Left cardiac atrium (tissue), 4 donors: ENCODE measurements at regions of chr15 and their contacts with region 1.

Region 1: DNA sequence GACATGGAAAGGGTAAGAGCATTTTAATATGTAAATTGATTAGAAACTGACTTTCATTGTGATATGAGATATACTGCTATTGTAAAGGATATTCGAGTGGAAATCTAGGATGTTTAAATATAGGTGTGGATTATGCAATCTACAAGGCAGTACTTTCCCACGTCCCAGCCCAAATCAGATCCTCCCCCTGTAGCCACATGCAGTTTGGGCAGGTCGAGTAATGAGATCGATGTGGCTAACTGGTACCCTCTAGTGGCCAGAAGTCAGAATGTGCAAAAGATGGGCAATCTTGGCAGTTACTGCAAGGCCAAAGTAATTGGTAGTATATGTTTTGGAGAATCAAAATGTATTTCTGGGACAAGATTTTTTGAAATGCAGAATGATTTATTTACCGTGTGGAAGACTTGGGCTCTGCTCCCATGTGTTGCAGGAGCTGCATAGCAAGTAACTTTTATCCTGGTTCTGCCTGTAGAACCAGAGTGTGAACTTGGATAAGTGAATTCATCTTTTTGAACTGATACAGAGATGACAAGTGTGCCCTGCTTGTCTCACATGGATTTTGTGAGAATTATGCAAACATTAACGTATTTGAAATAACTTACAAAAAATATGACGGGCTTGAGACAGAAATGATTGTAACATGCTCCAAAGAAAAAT is 94.5 kb upstream of the ADAMTSL3 start:
- DNase-seq: peak; percentile 48
- ATAC-seq: peak; percentile 38 to 81

Region 2: DNA sequence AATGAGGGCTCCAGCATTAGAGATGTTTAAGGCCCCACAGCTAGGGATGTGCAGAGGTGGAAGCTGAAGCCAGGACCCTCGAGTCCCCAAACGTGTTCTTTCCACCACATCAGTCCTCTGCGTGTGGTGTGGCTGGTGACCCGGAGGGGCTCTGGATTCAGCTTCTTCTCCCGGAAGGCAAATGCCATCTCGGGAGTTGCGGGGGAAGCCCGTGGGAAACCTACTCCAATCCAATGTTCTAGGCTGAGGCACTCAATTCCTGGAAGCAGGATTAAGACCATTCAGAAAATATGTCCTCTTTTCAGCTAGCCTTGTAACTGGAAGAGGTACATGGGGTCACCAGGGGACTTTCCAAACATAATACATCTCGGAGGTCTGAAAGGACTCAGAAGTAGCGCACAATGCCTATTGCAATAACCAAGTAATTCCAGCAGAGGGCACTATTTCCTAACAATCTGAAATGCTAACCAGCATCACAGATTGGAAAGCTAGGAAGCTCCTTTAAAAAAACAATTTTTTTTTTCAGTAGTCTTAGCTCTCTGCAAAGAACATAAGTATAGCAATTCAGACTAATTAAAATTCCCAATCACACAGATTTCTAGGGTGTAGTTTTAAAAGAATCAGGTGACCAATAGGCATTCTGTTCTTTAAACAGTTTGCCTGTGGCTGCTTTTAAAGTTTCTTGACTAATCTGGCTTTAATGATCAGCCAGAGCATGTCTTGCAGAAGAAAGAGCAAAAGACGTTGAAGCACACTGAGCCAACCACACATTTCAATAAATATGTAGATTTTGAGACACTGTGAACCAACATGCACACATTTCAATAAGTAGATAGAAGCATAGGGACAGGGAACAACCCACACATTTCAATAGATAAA is 311.0 kb before region 1 on chr15:
- intact Hi-C with region 1: loop called in 1 of 2 experiments (anchors 5 kb)
- DNase-seq: no peak
- ATAC-seq: peak; percentile 57

Region 3: GRCh38 chr15:83436458-83437158 is 122.8 kb before region 1 on chr15:
- intact Hi-C with region 1: loop called (anchors 2 to 5 kb)
- DNase-seq: no peak
- ATAC-seq: peak; percentile 67 to 91

Region 4: DNA sequence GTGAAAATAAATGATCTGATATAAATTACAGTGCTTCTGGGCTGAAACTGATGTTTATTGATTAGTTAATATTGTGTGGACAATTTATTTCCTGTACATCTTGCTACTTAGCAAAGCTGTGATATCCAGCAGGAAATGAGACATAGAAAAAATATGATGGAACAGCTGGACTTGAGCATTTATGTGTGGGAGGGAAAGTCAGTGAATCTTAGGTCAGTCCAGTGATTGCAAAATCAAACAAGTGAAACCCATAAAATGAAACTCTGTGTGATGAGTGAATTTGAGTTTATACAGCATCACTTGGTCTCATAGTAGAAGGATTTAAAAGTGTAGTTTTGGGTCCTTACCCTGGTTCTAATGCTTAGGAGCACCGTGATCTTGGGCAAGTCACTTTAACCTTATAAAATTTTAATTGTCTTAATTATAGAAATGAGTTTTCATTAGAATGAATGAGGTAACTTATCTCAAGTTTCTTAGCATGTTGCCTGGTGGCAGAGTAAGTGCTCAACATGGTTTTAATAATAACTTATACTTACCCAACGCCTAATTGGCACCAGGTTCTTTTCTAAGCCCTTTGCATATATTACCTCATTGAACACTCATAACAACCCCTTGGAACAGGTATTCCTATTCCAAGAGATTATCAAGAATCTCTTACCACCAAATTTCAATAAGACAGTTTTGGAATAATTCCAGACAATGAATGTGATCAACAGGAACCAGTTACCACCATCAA is 289.0 kb after region 1 on chr15:
- intact Hi-C with region 1: loop called in 1 of 2 experiments (anchors 10 kb)
- DNase-seq: no peak
- ATAC-seq: peak; percentile 45 to 54

Region 5: GRCh38 chr15:84035399-84035766 is 475.9 kb after region 1 on chr15:
- intact Hi-C with region 1: loop called in 1 of 2 experiments (anchors 10 kb)
- DNase-seq: no peak
- ATAC-seq: peak in 1 of 2 donors; percentile 76